Endothelial cell of umbilical vein (primary cell): ENCODE measurements at regions of chr6 and their contacts with region 1.

Region 1: DNA sequence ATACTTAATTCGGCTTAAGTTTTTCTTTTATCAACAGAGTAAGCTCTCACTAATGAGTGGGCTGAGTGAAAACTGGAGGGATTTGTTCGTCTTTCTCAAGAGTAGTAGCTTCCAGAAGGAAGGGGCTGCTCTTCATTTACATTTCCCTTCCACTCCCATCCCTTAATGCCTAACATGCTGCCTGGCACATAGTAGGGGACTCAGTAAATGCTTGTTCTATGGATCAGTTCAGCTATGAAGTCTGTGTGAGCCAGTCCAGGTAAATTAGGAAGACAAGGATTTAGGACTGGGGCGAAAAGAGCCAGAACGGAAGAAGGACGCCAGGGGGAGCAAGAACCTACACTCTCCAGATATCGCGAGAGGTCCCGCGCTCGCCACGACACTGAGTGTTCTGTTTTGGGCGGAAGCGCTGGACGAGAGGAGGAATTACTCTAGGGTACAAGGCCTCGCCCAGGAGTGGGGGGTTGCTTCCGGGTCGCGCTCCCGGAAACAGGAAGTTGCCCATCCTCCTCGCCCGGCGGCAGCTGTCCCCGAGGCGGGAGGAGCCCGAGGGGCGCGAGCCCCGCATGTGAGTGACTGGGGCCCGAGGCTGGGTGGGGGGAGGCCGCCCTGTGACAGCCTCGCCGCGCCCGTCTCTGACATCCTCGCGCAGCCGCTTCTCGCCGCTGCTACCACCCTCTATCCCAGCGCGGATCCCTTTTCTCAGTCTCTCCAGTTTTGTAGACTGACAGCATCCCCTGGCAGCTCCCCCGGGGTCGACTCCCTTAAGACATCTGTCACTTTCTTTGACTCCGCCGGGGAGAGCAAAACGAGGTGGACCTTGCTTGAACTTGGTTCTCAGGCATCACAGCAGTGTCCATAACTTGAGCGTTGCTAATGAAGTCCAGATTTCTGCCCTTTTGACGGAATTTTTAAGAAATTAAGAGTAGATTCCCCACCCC is at the start of gene C6orf89:
- DNase-seq: peak; percentile 96
- H3K4me3 ChIP-seq: peak within 1 kb of the TSS; percentile 77 to 95 (median 84)
- H3K27ac ChIP-seq: peak within 1 kb of the TSS; percentile 76
- H3K4me1 ChIP-seq: peaks cover 12% of the 10 kb centered on the region
- H3K27me3 ChIP-seq: no peaks in the 10 kb centered on the region
- CTCF ChIP-seq: peak; percentile 78 to 84
- POLR2A ChIP-seq: peak; percentile 89
- total RNA-seq, gene C6orf89: 34.0 and 36.4 TPM in 2 replicates

Region 2: DNA sequence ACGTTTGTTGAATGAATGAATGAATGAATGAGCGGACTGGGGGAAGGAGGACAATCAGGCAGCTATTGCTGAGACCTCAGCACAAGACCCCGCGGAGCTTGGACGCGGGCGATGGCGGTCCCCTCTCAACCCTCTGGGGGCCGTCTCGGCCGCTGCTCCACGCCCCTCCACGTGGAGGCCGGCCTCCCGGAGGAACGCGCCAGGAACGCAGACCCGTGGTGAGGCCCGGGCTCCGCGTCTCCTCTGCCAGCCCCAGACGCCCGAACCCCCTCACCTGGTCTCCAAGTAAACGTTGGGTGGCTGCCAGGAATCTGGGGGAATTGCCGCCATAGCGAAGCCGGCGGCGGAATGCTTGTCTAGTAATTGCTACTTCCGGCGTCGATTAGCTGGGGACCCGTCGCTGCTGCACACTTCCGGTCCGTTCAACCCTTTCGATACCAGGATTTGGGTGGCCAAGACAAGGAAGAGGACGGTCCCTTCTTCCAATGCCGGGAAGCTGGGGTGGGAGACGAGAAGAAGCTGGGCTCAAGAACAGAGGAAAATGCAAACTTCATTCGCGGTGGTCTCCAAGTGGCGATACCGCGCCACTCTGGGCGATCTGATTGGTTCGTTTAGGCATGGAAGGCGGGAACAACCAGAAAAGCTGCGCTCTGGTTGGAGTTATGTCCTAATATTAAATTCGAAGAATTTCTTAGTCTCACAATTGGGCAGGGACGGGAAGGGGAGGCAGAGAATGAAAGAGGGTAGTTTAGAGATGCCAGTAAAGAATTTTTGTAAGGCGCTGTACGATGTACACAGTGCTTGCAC is 11.1 kb before region 1 on chr6 and contains the start of gene PPIL1:
- CTCF ChIA-PET with region 1: interaction called, 28 read pairs
- POLR2A ChIA-PET with region 1: no interaction called
- dilution Hi-C with region 1: no loop called
- intact Hi-C with region 1: loop called (anchors 1 kb)
- DNase-seq: peak; percentile 93
- H3K4me3 ChIP-seq: peak within 1 kb of the TSS; percentile 63 to 95 (median 67)
- H3K27ac ChIP-seq: peak within 1 kb of the TSS; percentile 82
- H3K4me1 ChIP-seq: peaks cover 12% of the 10 kb centered on the region
- H3K27me3 ChIP-seq: no peaks in the 10 kb centered on the region
- CTCF ChIP-seq: peak in 1 of 2 donors; percentile 2
- POLR2A ChIP-seq: peak; percentile 59
- total RNA-seq, gene PPIL1: 33.8 and 35.6 TPM in 2 replicates

Region 3: GRCh38 chr6:36949636-36950035 is 63.9 kb after region 1 on chr6:
- CTCF ChIA-PET with region 1: interaction called, 6 read pairs
- POLR2A ChIA-PET with region 1: no interaction called
- dilution Hi-C with region 1: no loop called
- intact Hi-C with region 1: loop called (anchors 2 kb)
- DNase-seq: peak; percentile 88
- H3K4me3 ChIP-seq: no peak overlapping the region
- H3K27ac ChIP-seq: peak overlapping the region; percentile 96
- H3K4me1 ChIP-seq: peaks cover 13% of the 10 kb centered on the region
- H3K27me3 ChIP-seq: no peaks in the 10 kb centered on the region
- CTCF ChIP-seq: no peak
- POLR2A ChIP-seq: no peak

Region 4: DNA sequence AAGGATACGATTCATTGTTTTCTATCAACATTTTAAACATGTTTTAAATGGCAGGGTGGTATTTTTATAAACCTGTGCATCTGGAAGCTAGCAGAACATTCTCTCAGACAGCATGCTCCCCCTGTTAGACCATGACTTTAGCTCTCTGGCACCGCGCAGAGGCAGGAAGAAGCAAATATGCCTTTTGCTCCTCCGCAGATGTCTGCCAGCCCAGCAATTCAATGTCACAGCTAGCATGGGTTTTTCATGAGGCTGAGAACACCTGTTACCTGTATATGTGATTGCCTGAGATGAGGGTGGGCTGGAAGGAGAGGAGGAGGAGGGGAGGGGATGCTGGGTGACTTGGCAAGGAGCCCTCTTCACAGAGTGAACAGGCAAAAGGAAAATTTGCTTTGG is 93.6 kb after region 1 on chr6:
- CTCF ChIA-PET with region 1: interaction called, 11 read pairs
- POLR2A ChIA-PET with region 1: no interaction called
- dilution Hi-C with region 1: no loop called
- intact Hi-C with region 1: loop called (anchors 1 kb)
- DNase-seq: peak; percentile 47
- H3K4me3 ChIP-seq: no peak overlapping the region
- H3K27ac ChIP-seq: no peak overlapping the region
- H3K4me1 ChIP-seq: peaks cover 18% of the 10 kb centered on the region
- H3K27me3 ChIP-seq: no peaks in the 10 kb centered on the region
- CTCF ChIP-seq: peak; percentile 43 to 53
- POLR2A ChIP-seq: no peak

Region 5: GRCh38 chr6:36985808-36986703 is 100.3 kb after region 1 on chr6 and contains the start of gene MTCH1:
- CTCF ChIA-PET with region 1: interaction called, 8 read pairs
- POLR2A ChIA-PET with region 1: no interaction called
- dilution Hi-C with region 1: no loop called
- intact Hi-C with region 1: loop called (anchors 2 kb)
- DNase-seq: peak; percentile 86
- H3K4me3 ChIP-seq: peak within 1 kb of the TSS; percentile 71 to 95 (median 87)
- H3K27ac ChIP-seq: peak within 1 kb of the TSS; percentile 71
- H3K4me1 ChIP-seq: peaks cover 29% of the 10 kb centered on the region
- H3K27me3 ChIP-seq: peaks cover 0 to 5% of the 10 kb centered on the region in 2 experiments
- CTCF ChIP-seq: no peak
- POLR2A ChIP-seq: peak; percentile 97
- total RNA-seq, gene MTCH1: 218 and 226 TPM in 2 replicates